Gastrocnemius medialis (tissue), 4 donors: ENCODE measurements at regions of chr17 and their contacts with region 1.

Region 1: DNA sequence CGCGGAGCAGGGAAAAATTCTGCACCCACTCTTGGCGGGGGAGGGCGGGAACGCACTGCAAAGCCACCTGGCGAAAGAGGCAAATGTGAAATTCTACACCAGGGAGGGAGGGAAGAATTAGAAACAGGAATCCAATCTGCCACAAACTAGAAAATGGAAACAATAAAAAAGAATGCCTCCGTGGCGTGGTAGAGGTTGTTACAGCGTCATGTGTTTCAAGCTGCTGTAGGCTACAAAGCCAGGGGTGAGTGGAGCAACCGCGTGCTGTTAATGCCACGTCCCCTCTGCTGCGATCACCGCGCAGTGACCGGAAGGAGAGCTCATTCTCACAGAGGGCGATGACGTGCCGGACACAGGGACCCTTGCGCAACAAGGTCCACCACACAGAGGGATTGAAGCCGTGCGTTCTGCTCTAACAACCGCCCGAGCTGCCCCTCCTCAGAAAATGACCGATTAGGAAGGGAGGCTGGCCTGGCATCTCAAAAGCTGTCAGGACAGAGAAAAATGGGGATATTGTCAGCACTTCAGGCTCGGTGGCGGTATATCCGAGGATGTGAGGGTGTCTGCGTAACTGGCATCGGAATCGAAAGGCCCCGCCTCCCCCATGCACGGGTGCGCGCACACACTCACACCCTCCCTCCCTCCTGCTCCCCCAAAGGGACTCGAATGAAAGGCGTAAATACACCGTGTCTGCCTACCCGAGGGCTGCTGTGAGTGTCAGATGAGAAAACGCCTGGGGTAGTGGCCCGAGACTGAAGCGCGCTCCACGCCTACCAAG is 70.8 kb upstream of the TNRC6C start:
- DNase-seq: peak; percentile 67 to 84
- ATAC-seq: peak; percentile 87 to 91
- H3K4me3 ChIP-seq: peak overlapping the region; percentile 61 to 65 (median 62)
- H3K27ac ChIP-seq: peak overlapping the region; percentile 56 to 67 (median 65)
- H3K4me1 ChIP-seq: peaks cover 5 to 11% of the 10 kb centered on the region in 2 donors
- H3K27me3 ChIP-seq: no peaks in the 10 kb centered on the region
- CTCF ChIP-seq: no peak
- POLR2A ChIP-seq: peak; percentile 26 to 40

Region 2: GRCh38 chr17:77734341-77735080 is 153.1 kb before region 1 on chr17:
- in situ Hi-C with region 1: no loop called
- intact Hi-C with region 1: no loop called
- DNase-seq: peak; percentile 58 to 72
- ATAC-seq: peak; percentile 65 to 71
- H3K4me3 ChIP-seq: peak overlapping the region in 1 of 4 donors; percentile 24
- H3K27ac ChIP-seq: peak overlapping the region; percentile 57 to 74 (median 66)
- H3K4me1 ChIP-seq: peaks cover 27 to 28% of the 10 kb centered on the region in 2 donors
- H3K27me3 ChIP-seq: peaks cover 0 to 17% (median 13%) of the 10 kb centered on the region in 3 donors
- CTCF ChIP-seq: no peak
- POLR2A ChIP-seq: no peak

Region 3: GRCh38 chr17:77810536-77810935 is 77.1 kb before region 1 on chr17:
- in situ Hi-C with region 1: no loop called
- intact Hi-C with region 1: loop called (anchors 5 kb)
- DNase-seq: peak; percentile 58 to 76
- ATAC-seq: peak; percentile 95 to 97
- H3K4me3 ChIP-seq: no peak overlapping the region
- H3K27ac ChIP-seq: peak overlapping the region; percentile 70 to 81 (median 74)
- H3K4me1 ChIP-seq: peaks cover 20 to 29% of the 10 kb centered on the region in 2 donors
- H3K27me3 ChIP-seq: no peaks in the 10 kb centered on the region
- CTCF ChIP-seq: no peak
- POLR2A ChIP-seq: no peak

Region 4: DNA sequence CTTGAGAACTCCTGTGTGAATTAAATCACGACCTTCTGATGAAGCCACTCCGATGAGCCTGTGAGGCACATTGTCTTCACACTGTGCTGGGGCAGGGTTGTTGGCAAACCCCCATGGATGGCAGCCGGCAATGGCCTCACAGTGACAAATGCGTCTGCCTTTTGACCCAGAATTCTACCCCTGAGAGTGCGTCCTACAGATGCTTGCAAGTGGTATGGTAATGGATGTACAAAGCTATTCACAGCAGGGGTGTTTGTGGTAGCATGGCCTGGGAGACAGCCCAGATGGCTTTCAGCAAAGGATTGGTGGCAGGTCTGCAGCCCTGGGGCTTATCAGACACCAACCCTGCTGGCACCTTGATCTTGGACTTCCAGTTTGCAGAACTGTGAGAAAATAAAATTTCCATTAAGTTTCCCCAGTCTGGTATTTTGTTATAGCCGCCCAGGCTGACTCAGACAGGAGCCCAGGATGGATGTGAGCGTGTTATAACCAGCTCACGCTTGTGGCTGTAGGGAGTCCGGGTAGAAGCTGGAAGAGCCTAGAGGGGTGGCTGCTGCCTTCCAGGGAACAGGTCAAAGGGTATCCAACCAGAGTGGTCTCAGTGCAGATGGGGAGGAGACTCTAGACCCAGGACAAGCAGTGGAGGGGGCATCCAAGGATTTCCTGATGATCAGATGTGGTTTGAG is 309.6 kb after region 1 on chr17:
- in situ Hi-C with region 1: no loop called
- intact Hi-C with region 1: no loop called
- DNase-seq: no peak
- ATAC-seq: no peak
- H3K4me3 ChIP-seq: no peak overlapping the region
- H3K27ac ChIP-seq: no peak overlapping the region
- H3K4me1 ChIP-seq: no peaks in the 10 kb centered on the region
- H3K27me3 ChIP-seq: no peaks in the 10 kb centered on the region
- CTCF ChIP-seq: no peak
- POLR2A ChIP-seq: no peak